ENCODE measurements at regions of chr15 and their contacts with region 1.

Region 1: DNA sequence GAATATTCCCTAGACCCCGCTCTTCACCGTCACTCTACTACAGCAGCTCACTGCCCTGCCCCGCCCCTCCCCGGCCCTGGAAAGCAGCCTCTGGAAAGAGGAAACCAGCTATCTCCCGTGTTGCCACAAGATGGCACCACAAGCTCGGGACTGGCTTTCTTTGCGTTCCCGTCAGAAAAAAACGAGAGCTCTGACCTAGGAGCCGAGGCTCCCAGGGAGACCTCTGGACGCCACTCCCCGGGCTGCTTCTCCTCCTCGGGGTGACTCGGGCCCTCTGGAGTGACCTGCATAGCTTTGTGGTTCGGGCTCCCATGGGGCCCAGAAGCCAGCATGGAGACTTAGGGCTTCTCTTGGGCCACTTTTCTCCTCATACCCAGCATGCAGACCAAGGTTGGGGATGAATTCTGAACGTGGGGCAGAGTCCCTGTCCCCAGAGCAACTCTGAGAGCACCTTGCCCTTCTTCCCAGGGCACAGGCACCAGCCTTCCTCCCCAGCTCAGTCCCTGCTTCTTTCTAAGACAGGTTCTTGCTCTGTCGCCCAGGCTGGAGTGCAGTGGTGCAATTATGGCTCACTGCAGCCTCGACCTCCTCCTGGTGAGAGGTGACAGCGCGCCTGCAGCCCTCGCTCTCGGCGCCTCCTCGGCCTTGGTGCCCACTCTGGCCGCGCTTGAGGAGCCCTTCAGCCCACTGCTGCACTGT is 19.0 kb downstream of the STOML1 start:
- DNase-seq: no peak
- ATAC-seq: peak; percentile 97
- H3K4me3 ChIP-seq: no peak overlapping the region
- H3K27ac ChIP-seq: no peak overlapping the region
- H3K4me1 ChIP-seq: peaks cover 6% of the 10 kb centered on the region; the same call in 1 of the 2 replicates
- H3K27me3 ChIP-seq: no peaks in the 10 kb centered on the region
- CTCF ChIP-seq: peak; percentile 89 to 99 (median 93); a peak in 5 of 6 replicates
- EP300 ChIP-seq: no peak
- POLR2A ChIP-seq: no peak
- RAD21 ChIP-seq: peak; percentile 98

Region 2: GRCh38 chr15:73727330-73727976 is 245.7 kb before region 1 on chr15:
- CTCF ChIA-PET with region 1: no interaction called
- POLR2A ChIA-PET with region 1: no interaction called
- RAD21 ChIA-PET with region 1: no interaction called
- SMC1A ChIA-PET with region 1: no interaction called
- in situ Hi-C with region 1: no loop called
- intact Hi-C with region 1: no loop called
- DNase-seq: no peak
- ATAC-seq: no peak
- H3K4me3 ChIP-seq: no peak overlapping the region
- H3K27ac ChIP-seq: no peak overlapping the region
- H3K4me1 ChIP-seq: no peaks in the 10 kb centered on the region
- H3K27me3 ChIP-seq: peaks cover 1 to 3% of the 10 kb centered on the region in 2 experiments
- CTCF ChIP-seq: no peak
- EP300 ChIP-seq: no peak
- POLR2A ChIP-seq: no peak
- RAD21 ChIP-seq: no peak

Region 3: DNA sequence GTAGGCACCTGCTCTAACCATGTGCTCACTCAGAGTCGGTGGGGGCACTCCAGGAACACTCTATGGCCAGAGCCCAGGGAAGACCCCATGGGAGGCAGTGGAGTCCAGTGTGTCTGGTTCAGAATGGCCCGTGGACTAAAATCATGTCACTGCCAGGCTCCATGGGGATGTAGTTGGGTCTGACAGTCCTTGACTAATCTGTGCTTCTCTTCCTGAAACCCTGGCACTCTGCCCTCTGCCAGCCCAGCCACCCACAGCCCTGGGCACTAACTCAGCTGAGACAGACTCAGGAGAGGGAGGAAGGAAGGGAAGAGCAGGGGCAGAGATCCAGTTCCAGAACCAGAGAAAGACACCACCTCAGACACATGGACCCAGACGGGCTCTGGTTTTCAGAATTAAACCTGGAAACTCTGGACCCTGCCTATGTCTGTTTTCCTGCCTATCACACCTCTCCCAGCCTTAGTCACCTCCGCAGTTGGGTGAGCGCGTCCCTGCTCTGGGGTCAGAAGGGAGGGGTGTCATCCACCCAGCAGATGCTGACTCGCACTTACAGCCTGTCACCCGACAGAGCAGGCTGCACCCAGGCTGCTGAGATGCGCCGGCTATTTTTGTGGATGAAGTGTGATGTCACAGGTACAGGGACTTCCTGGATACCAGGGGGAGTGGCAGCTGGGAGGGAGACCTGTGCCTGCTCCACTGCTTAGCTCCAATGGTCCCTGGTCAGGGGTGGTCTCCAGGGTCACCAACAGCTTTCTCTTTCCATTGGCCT is 163.2 kb before region 1 on chr15:
- CTCF ChIA-PET with region 1: no interaction called
- POLR2A ChIA-PET with region 1: no interaction called
- RAD21 ChIA-PET with region 1: no interaction called
- SMC1A ChIA-PET with region 1: no interaction called
- in situ Hi-C with region 1: no loop called
- intact Hi-C with region 1: no loop called
- DNase-seq: no peak
- ATAC-seq: no peak
- H3K4me3 ChIP-seq: no peak overlapping the region
- H3K27ac ChIP-seq: no peak overlapping the region
- H3K4me1 ChIP-seq: no peaks in the 10 kb centered on the region
- H3K27me3 ChIP-seq: peaks cover 0 to 3% of the 10 kb centered on the region in 2 experiments; a peak in 2 of 4 replicates
- CTCF ChIP-seq: no peak
- EP300 ChIP-seq: no peak
- POLR2A ChIP-seq: no peak
- RAD21 ChIP-seq: no peak

Region 4: DNA sequence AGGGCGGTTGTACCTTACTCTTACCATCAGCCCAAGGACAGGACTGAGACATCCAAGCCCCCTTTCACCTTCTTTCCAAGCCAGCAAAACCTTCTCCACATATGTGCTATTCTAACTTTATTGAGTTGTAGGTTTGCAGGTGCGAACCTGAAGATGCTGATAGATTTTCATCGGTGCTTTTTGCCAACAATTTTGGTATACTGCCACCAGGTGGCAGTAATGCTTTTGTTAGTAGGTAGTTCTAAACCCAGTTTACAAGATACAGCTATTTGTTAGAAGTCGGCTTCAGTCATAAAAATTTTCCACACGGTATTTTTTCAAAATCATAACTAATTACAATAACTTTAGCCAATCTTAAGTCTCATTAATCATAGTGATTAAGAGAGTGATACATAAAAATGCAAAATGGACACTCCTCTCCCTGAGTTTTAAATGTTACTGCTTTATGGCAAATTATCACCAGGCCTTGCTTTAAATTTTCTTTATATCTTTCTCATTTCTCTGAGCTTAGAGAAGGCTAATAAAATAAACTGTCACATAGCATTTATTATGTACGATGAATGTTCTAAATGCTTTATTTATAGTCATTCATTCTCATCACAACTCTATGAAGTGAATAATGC is 99.1 kb before region 1 on chr15:
- CTCF ChIA-PET with region 1: interaction called, 12 read pairs
- POLR2A ChIA-PET with region 1: no interaction called
- RAD21 ChIA-PET with region 1: interaction called, 4 read pairs
- SMC1A ChIA-PET with region 1: no interaction called
- in situ Hi-C with region 1: no loop called
- intact Hi-C with region 1: no loop called
- DNase-seq: no peak
- ATAC-seq: peak; percentile 59
- H3K4me3 ChIP-seq: no peak overlapping the region
- H3K27ac ChIP-seq: no peak overlapping the region
- H3K4me1 ChIP-seq: no peaks in the 10 kb centered on the region
- H3K27me3 ChIP-seq: peaks cover 3 to 5% of the 10 kb centered on the region in 2 experiments; a peak in 3 of 4 replicates
- CTCF ChIP-seq: peak; percentile 52 to 70 (median 62)
- EP300 ChIP-seq: no peak
- POLR2A ChIP-seq: no peak
- RAD21 ChIP-seq: peak; percentile 57

Region 5: DNA sequence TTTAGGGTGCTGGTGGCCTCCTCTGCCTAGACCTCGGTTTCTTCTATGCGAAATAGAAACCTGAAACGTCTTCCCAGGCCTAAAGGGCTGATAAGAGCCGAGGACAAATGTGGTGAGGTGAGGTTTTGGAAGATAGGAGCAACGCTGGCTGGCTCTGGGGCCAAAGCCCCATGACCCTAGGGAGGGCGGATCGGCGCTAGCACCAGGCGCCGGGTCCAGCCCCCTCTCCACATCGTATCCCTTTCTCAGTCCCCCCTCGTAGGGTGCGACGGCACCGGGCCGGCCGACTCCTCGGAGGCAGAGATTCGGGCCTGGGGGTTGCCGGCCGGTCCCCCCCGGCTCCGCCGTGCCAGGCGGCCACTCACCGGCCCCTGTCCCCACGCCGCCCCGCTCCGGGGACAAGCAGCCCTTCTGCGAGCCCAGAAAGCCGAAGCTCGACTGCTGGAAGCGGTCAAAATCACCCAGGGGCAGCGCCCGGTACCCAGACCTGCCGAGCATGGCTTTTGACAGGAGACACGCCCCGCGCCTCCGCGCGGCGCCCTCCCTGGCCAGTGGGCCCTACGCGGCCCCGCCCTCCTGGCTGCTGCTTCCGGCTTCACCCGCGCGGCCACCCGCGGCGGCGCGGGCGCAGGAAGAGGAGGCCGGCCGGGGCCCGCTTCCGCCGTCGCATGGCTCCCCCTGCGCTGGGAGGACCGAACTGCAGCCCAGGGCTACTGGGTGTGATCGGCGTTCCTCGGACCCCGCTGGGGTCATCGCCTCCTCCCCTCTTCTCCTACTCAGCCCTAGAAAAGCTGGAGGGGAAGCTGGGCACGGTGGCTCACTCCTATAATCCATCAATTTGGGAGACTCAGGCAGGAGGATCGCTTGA is 18.8 kb after region 1 on chr15 and contains the start of gene STOML1:
- CTCF ChIA-PET with region 1: interaction called, 33 read pairs
- POLR2A ChIA-PET with region 1: interaction called, 6 read pairs
- RAD21 ChIA-PET with region 1: interaction called, 17 read pairs
- SMC1A ChIA-PET with region 1: interaction called, 11 read pairs
- in situ Hi-C with region 1: no loop called
- intact Hi-C with region 1: no loop called
- DNase-seq: no peak
- ATAC-seq: peak; percentile 85
- H3K4me3 ChIP-seq: peak within 1 kb of the TSS; percentile 95
- H3K27ac ChIP-seq: peak within 1 kb of the TSS; percentile 54
- H3K4me1 ChIP-seq: peaks cover 31% of the 10 kb centered on the region
- H3K27me3 ChIP-seq: no peaks in the 10 kb centered on the region
- CTCF ChIP-seq: peak; percentile 89 to 93 (median 92)
- EP300 ChIP-seq: no peak
- POLR2A ChIP-seq: peak; percentile 79
- RAD21 ChIP-seq: no peak
- polyA plus RNA-seq, gene STOML1: 0.14 to 0.46 TPM

Region 6: GRCh38 chr15:74025436-74025835 is 52.3 kb after region 1 on chr15:
- CTCF ChIA-PET with region 1: interaction called, 10 read pairs
- POLR2A ChIA-PET with region 1: no interaction called
- RAD21 ChIA-PET with region 1: interaction called, 3 read pairs
- SMC1A ChIA-PET with region 1: interaction called, 6 read pairs
- in situ Hi-C with region 1: no loop called
- intact Hi-C with region 1: loop called (anchors 5 kb)
- DNase-seq: no peak
- ATAC-seq: no peak
- H3K4me3 ChIP-seq: no peak overlapping the region
- H3K27ac ChIP-seq: no peak overlapping the region
- H3K4me1 ChIP-seq: no peaks in the 10 kb centered on the region
- H3K27me3 ChIP-seq: no peaks in the 10 kb centered on the region
- CTCF ChIP-seq: no peak
- EP300 ChIP-seq: no peak
- POLR2A ChIP-seq: no peak
- RAD21 ChIP-seq: no peak

Region 7: DNA sequence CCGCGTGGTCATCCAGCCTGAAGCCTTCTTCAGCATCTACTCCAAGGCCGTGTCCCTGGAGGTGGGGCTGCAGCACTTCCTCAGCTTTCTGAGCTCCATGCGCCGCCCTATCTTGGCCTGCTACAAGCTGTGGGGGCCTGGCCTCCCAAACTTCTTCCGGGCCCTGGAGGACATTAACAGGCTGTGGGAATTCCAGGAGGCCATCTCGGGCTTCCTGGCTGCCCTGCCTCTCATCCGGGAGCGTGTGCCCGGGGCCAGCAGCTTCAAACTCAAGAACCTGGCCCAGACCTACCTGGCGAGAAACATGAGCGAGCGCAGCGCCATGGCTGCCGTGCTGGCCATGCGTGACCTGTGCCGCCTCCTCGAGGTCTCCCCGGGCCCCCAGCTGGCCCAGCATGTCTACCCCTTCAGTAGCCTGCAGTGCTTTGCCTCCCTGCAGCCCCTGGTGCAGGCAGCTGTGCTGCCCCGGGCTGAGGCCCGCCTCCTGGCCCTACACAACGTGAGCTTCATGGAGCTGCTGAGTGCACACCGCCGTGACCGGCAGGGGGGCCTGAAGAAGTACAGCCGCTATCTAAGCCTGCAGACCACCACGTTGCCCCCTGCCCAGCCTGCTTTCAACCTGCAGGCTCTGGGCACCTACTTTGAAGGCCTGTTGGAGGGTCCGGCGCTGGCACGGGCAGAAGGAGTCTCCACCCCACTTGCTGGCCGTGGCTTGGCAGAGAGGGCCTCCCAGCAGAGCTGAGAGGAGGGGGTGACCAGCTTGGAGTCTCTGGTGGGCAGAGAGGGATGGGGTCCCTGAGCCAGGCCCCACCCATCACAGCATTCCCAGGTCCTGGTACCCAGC is 71.4 kb after region 1 on chr15:
- CTCF ChIA-PET with region 1: interaction called, 61 read pairs
- POLR2A ChIA-PET with region 1: interaction called, 4 read pairs
- RAD21 ChIA-PET with region 1: interaction called, 28 read pairs
- SMC1A ChIA-PET with region 1: interaction called, 18 read pairs
- in situ Hi-C with region 1: no loop called
- intact Hi-C with region 1: no loop called
- DNase-seq: no peak
- ATAC-seq: no peak
- H3K4me3 ChIP-seq: no peak overlapping the region
- H3K27ac ChIP-seq: no peak overlapping the region
- H3K4me1 ChIP-seq: 0 out of 2 replicates have a peak, but pooled peaks cover 2% of the 10 kb centered on the region
- H3K27me3 ChIP-seq: no peaks in the 10 kb centered on the region
- CTCF ChIP-seq: no peak
- EP300 ChIP-seq: no peak
- POLR2A ChIP-seq: no peak
- RAD21 ChIP-seq: no peak

Region 8: GRCh38 chr15:74307827-74308644 is 334.9 kb after region 1 on chr15:
- CTCF ChIA-PET with region 1: interaction called, 7 read pairs
- POLR2A ChIA-PET with region 1: no interaction called
- RAD21 ChIA-PET with region 1: interaction called, 6 read pairs
- SMC1A ChIA-PET with region 1: interaction called, 4 read pairs
- in situ Hi-C with region 1: loop called (anchors 10 kb)
- intact Hi-C with region 1: loop called (anchors 1 kb)
- DNase-seq: no peak
- ATAC-seq: peak; percentile 89
- H3K4me3 ChIP-seq: no peak overlapping the region
- H3K27ac ChIP-seq: no peak overlapping the region
- H3K4me1 ChIP-seq: no peaks in the 10 kb centered on the region
- H3K27me3 ChIP-seq: peaks cover 0 to 2% of the 10 kb centered on the region in 2 experiments; a peak in 2 of 4 replicates
- CTCF ChIP-seq: peak; percentile 68 to 79 (median 75)
- EP300 ChIP-seq: no peak
- POLR2A ChIP-seq: no peak
- RAD21 ChIP-seq: peak; percentile 94

Region 9: GRCh38 chr15:74365611-74366440 is 392.7 kb after region 1 on chr15:
- CTCF ChIA-PET with region 1: interaction called, 10 read pairs
- POLR2A ChIA-PET with region 1: no interaction called
- RAD21 ChIA-PET with region 1: interaction called, 3 read pairs
- SMC1A ChIA-PET with region 1: no interaction called
- in situ Hi-C with region 1: no loop called
- intact Hi-C with region 1: no loop called
- DNase-seq: no peak
- ATAC-seq: peak; percentile 70
- H3K4me3 ChIP-seq: peak overlapping the region; percentile 30; the same call in 1 of the 2 replicates
- H3K27ac ChIP-seq: no peak overlapping the region
- H3K4me1 ChIP-seq: no peaks in the 10 kb centered on the region
- H3K27me3 ChIP-seq: peaks cover 4 to 5% of the 10 kb centered on the region in 2 experiments; a peak in 3 of 4 replicates
- CTCF ChIP-seq: no peak
- EP300 ChIP-seq: no peak
- POLR2A ChIP-seq: no peak
- RAD21 ChIP-seq: no peak

Measured in GM12878 (cell line).